ENCODE measurements at regions of chr7 and their contacts with region 1.

Region 1: GRCh38 chr7:19747740-19748339 is 25.6 kb downstream of the TMEM196 start:
- H3K4me3 ChIP-seq: no peak overlapping the region
- H3K27ac ChIP-seq: no peak overlapping the region
- H3K4me1 ChIP-seq: no peaks in the 10 kb centered on the region
- CTCF ChIP-seq: no peak

Region 2: DNA sequence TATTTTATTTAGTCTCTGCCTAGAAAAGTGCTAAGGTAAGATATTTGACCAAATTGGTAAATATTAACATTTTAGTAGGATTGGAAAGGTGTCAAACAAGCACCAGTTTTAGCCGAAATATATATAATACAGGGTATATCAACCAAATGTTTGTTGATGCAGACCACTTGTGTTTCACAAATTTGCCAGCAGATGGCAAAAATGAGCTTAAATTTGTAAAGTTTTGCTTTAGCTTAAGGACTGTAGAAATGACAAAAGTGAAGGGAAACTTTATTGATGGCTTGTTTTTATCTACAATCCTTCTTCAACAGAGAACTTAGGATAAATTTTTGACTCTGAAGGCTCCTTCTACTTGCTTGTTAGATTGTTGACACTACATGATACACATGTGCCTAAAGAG is 34.2 kb before region 1 on chr7:
- CTCF ChIA-PET with region 1: interaction called, 11 read pairs
- POLR2A ChIA-PET with region 1: no interaction called
- H3K4me3 ChIP-seq: no peak overlapping the region
- H3K27ac ChIP-seq: no peak overlapping the region
- H3K4me1 ChIP-seq: no peaks in the 10 kb centered on the region
- CTCF ChIP-seq: no peak

Measured in HEK293 (cell line).